ENCODE measurements at regions of chr2 and their contacts with region 1.

Region 1: GRCh38 chr2:226215902-226216503 is 583.6 kb downstream of the IRS1 start:
- DNase-seq: peak; percentile 27
- ATAC-seq: peak; percentile 75

Region 2: GRCh38 chr2:225889446-225889850 is 326.6 kb before region 1 on chr2:
- intact Hi-C with region 1: loop called (anchors 5 kb)
- DNase-seq: no peak
- ATAC-seq: no peak

Region 3: GRCh38 chr2:226002438-226002837 is 213.6 kb before region 1 on chr2:
- intact Hi-C with region 1: no loop called
- DNase-seq: peak; percentile 35
- ATAC-seq: peak; percentile 92

Region 4: GRCh38 chr2:226366920-226367319 is 150.9 kb after region 1 on chr2:
- intact Hi-C with region 1: no loop called
- DNase-seq: no peak
- ATAC-seq: no peak